ENCODE measurements at regions of chrX and their contacts with region 1.

Region 1: GRCh38 chrX:49269010-49269767 is 404 bp upstream of the PPP1R3F start:
- DNase-seq: peak; percentile 84 to 98 (median 91)
- ATAC-seq: peak; percentile 84
- H3K4me3 ChIP-seq: peak overlapping the region; percentile 71 to 84
- H3K4me3 Mint-ChIP-seq: peak overlapping the region; percentile 94
- H3K27ac ChIP-seq: peak overlapping the region; percentile 100
- H3K27ac Mint-ChIP-seq: peak overlapping the region; percentile 100
- H3K4me1 ChIP-seq: peaks cover 44% of the 10 kb centered on the region
- H3K4me1 Mint-ChIP-seq: peaks cover 50% of the 10 kb centered on the region
- H3K27me3 ChIP-seq: no peaks in the 10 kb centered on the region
- H3K27me3 Mint-ChIP-seq: no peaks in the 10 kb centered on the region
- CTCF ChIP-seq: no peak

Region 2: GRCh38 chrX:49120099-49120498 is 149.1 kb before region 1 on chrX:
- CTCF ChIA-PET with region 1: no interaction called
- POLR2A ChIA-PET with region 1: no interaction called
- intact Hi-C with region 1: loop called in 1 of 2 experiments (anchors 2 kb)
- DNase-seq: no peak
- ATAC-seq: no peak
- H3K4me3 ChIP-seq: no peak overlapping the region
- H3K4me3 Mint-ChIP-seq: no peak overlapping the region
- H3K27ac ChIP-seq: no peak overlapping the region
- H3K27ac Mint-ChIP-seq: no peak overlapping the region
- H3K4me1 ChIP-seq: peaks cover 26% of the 10 kb centered on the region
- H3K4me1 Mint-ChIP-seq: peaks cover 48% of the 10 kb centered on the region
- H3K27me3 ChIP-seq: no peaks in the 10 kb centered on the region
- H3K27me3 Mint-ChIP-seq: no peaks in the 10 kb centered on the region
- CTCF ChIP-seq: no peak

Region 3: DNA sequence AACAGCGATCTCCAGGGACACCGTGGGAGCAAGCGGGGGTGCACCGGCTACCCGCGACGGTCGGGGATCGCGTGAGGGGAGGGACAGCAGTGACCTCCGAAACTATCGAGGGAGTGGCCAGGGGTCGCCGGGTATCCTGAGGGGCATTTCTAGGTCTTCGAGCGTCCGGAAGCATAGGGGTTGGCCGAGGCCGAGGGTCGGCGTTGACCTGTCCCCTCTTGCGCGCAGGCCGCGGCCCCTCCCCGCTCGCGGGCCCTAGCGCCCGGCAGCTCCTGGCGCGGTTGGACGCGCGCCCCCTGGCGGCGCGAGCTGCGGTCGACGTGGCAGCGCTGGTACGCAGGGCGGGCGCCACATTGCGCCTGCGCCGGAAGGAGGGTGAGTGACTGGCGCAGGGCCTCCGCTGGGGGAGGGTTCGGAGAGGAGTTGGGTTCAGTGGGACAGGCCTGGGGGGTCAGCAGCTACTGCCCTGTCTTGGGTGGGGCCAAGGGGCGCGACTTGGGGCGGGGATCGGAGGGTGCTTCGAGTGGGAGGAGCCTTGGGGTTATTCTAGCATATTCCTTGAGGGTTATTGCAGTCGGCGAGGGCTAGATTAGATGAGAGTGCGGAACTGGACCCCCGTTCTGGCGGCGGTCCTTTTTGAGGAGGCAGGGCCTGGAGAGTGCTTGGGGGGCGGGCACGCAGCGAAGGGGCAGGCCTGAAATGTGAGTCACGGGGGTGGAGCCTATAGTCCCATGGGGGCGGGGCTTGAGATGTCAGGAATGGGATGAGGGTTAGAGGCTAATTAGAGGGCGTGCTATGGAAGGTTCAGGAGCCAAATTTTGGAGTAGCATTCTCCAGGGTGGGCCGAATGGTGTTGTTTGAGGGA is 105.4 kb before region 1 on chrX:
- CTCF ChIA-PET with region 1: no interaction called
- POLR2A ChIA-PET with region 1: interaction called, 6 read pairs
- intact Hi-C with region 1: loop called in 1 of 2 experiments (anchors 1 kb)
- DNase-seq: peak in 8 of 9 experiments; percentile 67 to 91 (median 82)
- ATAC-seq: peak; percentile 54
- H3K4me3 ChIP-seq: peak overlapping the region; percentile 49
- H3K4me3 Mint-ChIP-seq: peak overlapping the region; percentile 81
- H3K27ac ChIP-seq: peak overlapping the region; percentile 56 to 84
- H3K27ac Mint-ChIP-seq: peak overlapping the region; percentile 92
- H3K4me1 ChIP-seq: peaks cover 21% of the 10 kb centered on the region
- H3K4me1 Mint-ChIP-seq: peaks cover 27% of the 10 kb centered on the region
- H3K27me3 ChIP-seq: no peaks in the 10 kb centered on the region
- H3K27me3 Mint-ChIP-seq: no peaks in the 10 kb centered on the region
- CTCF ChIP-seq: peak; percentile 57

Region 4: DNA sequence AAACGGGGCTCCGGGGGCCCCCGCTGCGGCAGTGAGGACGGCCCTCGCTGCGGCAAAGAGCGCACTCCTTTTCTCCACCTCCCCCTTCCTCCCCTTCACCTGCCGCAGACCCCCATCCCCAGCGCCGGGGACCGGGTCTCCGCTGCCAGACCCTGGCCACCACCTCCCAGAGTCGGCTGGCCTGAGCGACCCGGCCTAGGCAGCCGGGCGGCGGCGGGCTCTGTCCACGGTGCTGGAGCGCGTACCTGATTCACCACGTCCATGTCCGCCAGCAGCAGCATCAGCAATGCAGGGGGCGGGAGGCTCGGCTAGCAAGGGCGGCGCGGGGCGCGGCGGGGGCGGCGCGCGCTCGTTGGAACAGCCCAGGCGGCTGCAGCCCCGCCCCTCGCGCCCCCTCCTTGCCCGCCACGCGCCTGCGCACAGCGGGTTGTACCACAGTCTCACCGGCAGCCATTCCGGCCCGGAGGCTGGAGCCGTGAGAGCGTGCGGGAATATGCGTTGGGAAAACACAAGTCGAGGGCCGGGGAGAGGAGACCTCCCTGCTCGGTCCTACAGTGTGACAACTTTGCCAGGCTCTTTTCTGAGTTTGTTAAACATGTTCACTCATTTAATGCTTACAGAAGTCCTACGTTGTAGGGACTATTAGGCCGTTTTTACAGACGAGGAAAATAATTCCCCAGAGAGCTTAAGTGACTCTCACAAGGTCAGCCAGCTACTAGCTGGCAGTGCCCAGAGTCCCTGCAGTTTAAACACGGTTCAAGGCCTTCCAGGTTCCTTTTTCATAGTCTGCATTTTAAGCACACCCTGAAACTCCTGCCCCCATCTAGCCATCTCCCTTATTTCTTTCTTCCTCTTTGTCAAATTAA is 69.0 kb before region 1 on chrX and contains the start of gene SYP:
- CTCF ChIA-PET with region 1: no interaction called
- POLR2A ChIA-PET with region 1: no interaction called
- intact Hi-C with region 1: loop called (anchors 1 to 5 kb)
- DNase-seq: peak; percentile 71 to 92 (median 88)
- ATAC-seq: peak; percentile 99
- H3K4me3 ChIP-seq: peak within 1 kb of the TSS; percentile 39 to 50
- H3K4me3 Mint-ChIP-seq: peak within 1 kb of the TSS; percentile 72
- H3K27ac ChIP-seq: peak within 1 kb of the TSS; percentile 53 to 54
- H3K27ac Mint-ChIP-seq: peak within 1 kb of the TSS; percentile 82
- H3K4me1 ChIP-seq: no peaks in the 10 kb centered on the region
- H3K4me1 Mint-ChIP-seq: peaks cover 14% of the 10 kb centered on the region
- H3K27me3 ChIP-seq: no peaks in the 10 kb centered on the region
- H3K27me3 Mint-ChIP-seq: no peaks in the 10 kb centered on the region
- CTCF ChIP-seq: no peak
- total RNA-seq, gene SYP: 0.44 to 0.65 TPM

Region 5: DNA sequence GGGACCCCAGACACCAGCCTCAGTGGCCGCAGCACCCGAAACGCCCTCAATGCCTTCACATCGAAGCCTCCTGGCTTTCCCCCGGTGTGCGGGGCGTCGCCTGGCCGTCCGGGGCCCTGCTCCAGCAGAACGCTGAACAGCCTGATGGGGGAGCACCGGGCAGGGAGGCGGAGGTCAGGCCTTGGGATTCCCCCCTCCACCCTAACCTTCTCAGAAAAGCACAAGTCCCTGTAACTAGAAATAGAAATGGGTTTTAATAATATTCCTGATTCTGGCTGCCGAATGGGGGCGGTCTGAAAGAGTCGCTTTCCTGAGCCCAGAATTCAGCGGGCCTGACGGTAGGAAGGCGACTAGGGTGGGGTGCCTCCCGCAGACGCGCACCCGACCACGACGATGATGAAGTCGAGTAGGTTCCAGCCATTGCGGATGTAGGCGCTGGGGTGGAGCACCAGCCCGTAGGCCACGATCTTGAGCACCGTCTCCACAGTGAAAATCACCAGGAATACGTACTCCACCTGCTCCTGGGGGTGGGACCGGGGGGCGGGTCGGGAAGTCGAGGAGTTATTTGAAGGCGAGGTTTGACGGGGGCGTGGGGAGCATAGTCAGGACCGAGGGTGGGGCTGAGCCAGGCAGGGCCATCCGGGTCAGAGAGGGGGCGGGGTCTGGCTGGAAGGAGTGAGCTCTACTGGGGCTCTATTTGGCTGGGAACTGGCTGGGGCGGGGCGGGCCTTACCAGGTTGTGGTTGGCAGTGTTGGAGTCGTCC is 38.5 kb before region 1 on chrX:
- CTCF ChIA-PET with region 1: no interaction called
- POLR2A ChIA-PET with region 1: interaction called, 10 read pairs
- intact Hi-C with region 1: loop called in 1 of 2 experiments (anchors 1 kb)
- DNase-seq: peak; percentile 18 to 76 (median 50)
- ATAC-seq: peak; percentile 70
- H3K4me3 ChIP-seq: peak overlapping the region; percentile 48
- H3K4me3 Mint-ChIP-seq: peak overlapping the region; percentile 81
- H3K27ac ChIP-seq: peak overlapping the region; percentile 66 to 75
- H3K27ac Mint-ChIP-seq: peak overlapping the region; percentile 91
- H3K4me1 ChIP-seq: peaks cover 9% of the 10 kb centered on the region
- H3K4me1 Mint-ChIP-seq: peaks cover 14% of the 10 kb centered on the region
- H3K27me3 ChIP-seq: no peaks in the 10 kb centered on the region
- H3K27me3 Mint-ChIP-seq: no peaks in the 10 kb centered on the region
- CTCF ChIP-seq: no peak

Region 6: DNA sequence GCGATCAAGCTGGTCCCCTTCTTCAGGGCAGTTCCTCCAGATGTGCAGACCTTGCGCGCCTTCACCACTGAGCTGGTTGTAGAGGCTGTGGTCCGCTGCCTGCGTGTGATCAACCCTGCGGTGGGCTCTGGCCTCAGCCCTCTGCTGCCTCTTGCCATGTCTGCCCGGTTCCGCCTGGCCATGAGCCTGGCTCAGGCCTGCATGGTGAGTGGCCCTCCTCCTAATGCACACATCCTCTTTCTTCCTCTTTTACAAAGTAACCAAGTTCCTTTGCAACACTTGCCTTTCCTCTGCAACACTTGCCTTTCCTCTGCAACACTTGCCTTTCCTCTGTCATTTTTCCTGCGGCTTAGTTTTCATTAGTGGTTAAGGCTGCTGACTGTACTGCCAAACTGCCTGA is 32.1 kb before region 1 on chrX:
- CTCF ChIA-PET with region 1: no interaction called
- POLR2A ChIA-PET with region 1: interaction called, 10 read pairs
- intact Hi-C with region 1: loop called in 1 of 2 experiments (anchors 1 kb)
- DNase-seq: peak in 1 of 9 experiments; percentile 20
- ATAC-seq: no peak
- H3K4me3 ChIP-seq: no peak overlapping the region
- H3K4me3 Mint-ChIP-seq: peak overlapping the region; percentile 92
- H3K27ac ChIP-seq: peak overlapping the region in 1 of 2 experiments; percentile 12
- H3K27ac Mint-ChIP-seq: peak overlapping the region; percentile 69
- H3K4me1 ChIP-seq: peaks cover 14% of the 10 kb centered on the region
- H3K4me1 Mint-ChIP-seq: peaks cover 28% of the 10 kb centered on the region
- H3K27me3 ChIP-seq: no peaks in the 10 kb centered on the region
- H3K27me3 Mint-ChIP-seq: no peaks in the 10 kb centered on the region
- CTCF ChIP-seq: no peak

Region 7: DNA sequence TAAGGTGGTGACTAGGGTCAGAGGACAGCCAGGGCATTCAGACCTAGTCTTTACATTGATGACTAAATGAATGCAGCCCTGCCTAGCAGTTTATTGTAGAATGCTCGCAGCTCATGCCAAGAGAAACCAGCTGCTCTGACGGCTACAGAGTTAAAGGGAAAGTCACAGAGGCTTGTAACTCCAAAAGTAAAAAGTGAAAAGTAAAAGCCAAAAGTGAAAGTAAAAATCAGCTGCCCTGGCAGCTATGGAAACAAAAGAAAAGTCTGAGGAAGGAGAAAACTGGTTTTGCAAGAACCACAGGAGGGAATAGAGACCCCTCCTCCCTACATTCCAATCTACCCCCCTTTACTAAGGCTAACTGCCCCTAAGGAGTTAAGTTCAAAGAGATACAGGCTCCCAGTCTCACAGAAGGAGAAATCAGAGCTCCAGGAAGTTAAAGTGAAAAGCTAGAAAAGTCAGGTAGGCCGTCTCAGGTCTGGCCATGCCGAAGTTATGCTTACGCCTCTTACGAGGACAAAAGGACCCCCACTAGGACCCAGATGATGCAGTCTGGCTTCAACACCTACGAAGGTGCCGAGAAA is 40.3 kb after region 1 on chrX:
- CTCF ChIA-PET with region 1: interaction called, 3 read pairs
- POLR2A ChIA-PET with region 1: interaction called, 8 read pairs
- intact Hi-C with region 1: loop called (anchors 1 to 2 kb)
- DNase-seq: peak in 7 of 9 experiments; percentile 1 to 64 (median 35)
- ATAC-seq: peak; percentile 74
- H3K4me3 ChIP-seq: peak overlapping the region; percentile 36 to 54
- H3K4me3 Mint-ChIP-seq: peak overlapping the region; percentile 86
- H3K27ac ChIP-seq: peak overlapping the region; percentile 64 to 78
- H3K27ac Mint-ChIP-seq: peak overlapping the region; percentile 97
- H3K4me1 ChIP-seq: peaks cover 18% of the 10 kb centered on the region
- H3K4me1 Mint-ChIP-seq: peaks cover 21% of the 10 kb centered on the region
- H3K27me3 ChIP-seq: no peaks in the 10 kb centered on the region
- H3K27me3 Mint-ChIP-seq: no peaks in the 10 kb centered on the region
- CTCF ChIP-seq: no peak

Measured in CD8-positive, alpha-beta T cell (primary cell).